ENCODE measurements at regions of chr16 and their contacts with region 1.

Region 1: DNA sequence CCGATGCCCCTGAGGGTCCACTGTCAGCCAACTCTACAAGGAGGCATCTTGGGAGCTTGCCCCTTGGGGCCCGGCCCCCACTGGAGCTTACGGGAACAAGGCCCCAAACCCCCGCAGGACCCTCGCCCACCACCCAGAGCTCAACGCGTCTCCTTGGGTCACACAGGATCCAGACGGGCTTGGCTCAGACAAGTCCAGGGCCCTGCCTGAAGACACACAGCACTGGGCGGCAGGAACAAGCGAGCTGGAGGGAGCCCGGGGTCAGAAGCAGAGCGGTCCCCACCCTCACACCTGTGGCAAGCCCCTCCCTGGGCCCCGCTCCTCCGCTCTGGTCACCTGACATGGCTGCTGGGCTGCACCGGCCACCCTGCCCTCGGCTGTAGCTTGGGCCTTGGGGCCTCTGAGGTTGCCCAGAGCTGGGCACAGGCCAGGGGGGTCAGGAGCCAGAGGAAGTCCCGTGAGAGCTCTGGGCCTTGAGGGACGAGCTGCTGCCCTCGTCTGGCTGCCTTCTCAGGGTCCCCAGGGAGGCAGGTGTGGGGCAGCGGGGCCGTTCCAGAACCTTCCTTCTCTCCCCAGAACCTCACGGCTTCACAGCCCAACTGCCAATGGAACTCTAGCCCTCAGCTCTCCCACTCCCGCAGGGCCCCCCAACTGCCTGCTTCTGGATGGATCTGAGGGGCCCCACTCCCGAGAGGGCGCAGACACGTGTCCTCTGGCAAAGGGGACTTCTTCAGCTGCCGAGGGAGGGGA is at the start of gene CCDC154:
- DNase-seq: no peak
- ATAC-seq: no peak
- H3K4me3 Mint-ChIP-seq: no peak within 1 kb of the TSS
- H3K27ac Mint-ChIP-seq: no peak within 1 kb of the TSS
- H3K4me1 Mint-ChIP-seq: no peaks in the 10 kb centered on the region
- H3K27me3 Mint-ChIP-seq: no peaks in the 10 kb centered on the region
- total RNA-seq, gene CCDC154: 6.1 to 6.5 TPM

Region 2: GRCh38 chr16:1308977-1309885 is 134.9 kb before region 1 on chr16 and contains the start of gene UBE2I:
- POLR2A ChIA-PET with region 1: no interaction called
- DNase-seq: peak; percentile 99
- ATAC-seq: peak; percentile 62
- H3K4me3 Mint-ChIP-seq: peak within 1 kb of the TSS; percentile 100
- H3K27ac Mint-ChIP-seq: peak within 1 kb of the TSS; percentile 99
- H3K4me1 Mint-ChIP-seq: peaks cover 33% of the 10 kb centered on the region
- H3K27me3 Mint-ChIP-seq: no peaks in the 10 kb centered on the region
- total RNA-seq, gene UBE2I: 211 to 232 TPM

Region 3: DNA sequence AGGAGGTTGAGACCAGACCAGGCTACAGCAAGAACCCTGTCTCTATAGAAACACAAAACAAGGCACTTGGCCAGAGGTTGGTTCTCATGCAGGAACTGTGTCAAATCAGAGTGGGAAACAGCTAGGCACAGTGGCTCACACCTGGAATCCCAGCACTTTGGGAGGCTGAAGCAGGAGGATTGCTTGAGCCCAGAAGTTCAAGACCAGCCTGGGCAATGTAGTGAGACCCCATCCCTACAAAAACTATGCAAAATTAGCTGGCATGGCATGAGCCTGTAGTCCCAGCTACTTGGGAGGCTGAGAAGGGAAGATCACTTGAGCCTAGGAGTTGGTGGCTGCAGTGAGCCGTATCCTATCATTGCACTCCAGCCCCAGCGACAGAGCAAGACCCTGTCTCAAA is 31.3 kb before region 1 on chr16:
- POLR2A ChIA-PET with region 1: interaction called, 11 read pairs
- DNase-seq: no peak
- ATAC-seq: no peak
- H3K4me3 Mint-ChIP-seq: no peak overlapping the region
- H3K27ac Mint-ChIP-seq: peak overlapping the region; percentile 51
- H3K4me1 Mint-ChIP-seq: peaks cover 18% of the 10 kb centered on the region
- H3K27me3 Mint-ChIP-seq: no peaks in the 10 kb centered on the region

Region 4: DNA sequence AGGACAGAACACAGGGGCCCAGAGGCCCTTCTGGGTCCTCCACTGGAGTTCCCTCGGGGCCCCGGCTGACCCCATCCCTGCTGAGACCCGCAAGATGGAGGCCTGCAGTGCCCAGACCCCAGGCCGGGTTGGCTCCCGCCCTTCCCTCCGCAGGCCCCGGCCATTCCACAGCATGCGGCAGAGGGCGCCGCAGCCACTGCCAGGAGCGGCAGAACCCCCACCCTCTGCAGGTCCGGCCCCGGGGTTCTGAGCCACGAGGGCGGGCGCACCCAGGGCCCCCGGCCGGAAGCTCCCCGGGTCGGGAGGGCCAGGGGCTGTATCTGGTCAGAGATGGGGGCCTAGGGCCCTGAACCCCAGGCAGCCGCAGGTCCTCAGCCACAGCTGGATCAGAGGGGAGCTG is 15.6 kb before region 1 on chr16:
- POLR2A ChIA-PET with region 1: no interaction called
- DNase-seq: peak; percentile 76
- ATAC-seq: peak; percentile 73
- H3K4me3 Mint-ChIP-seq: no peak overlapping the region
- H3K27ac Mint-ChIP-seq: no peak overlapping the region
- H3K4me1 Mint-ChIP-seq: no peaks in the 10 kb centered on the region
- H3K27me3 Mint-ChIP-seq: no peaks in the 10 kb centered on the region

Region 5: GRCh38 chr16:1458336-1458976 is 14.3 kb after region 1 on chr16:
- POLR2A ChIA-PET with region 1: no interaction called
- DNase-seq: no peak
- ATAC-seq: no peak
- H3K4me3 Mint-ChIP-seq: no peak overlapping the region
- H3K27ac Mint-ChIP-seq: no peak overlapping the region
- H3K4me1 Mint-ChIP-seq: peaks cover 6% of the 10 kb centered on the region
- H3K27me3 Mint-ChIP-seq: no peaks in the 10 kb centered on the region